ENCODE measurements at regions of chr2 and their contacts with region 1.

Region 1: DNA sequence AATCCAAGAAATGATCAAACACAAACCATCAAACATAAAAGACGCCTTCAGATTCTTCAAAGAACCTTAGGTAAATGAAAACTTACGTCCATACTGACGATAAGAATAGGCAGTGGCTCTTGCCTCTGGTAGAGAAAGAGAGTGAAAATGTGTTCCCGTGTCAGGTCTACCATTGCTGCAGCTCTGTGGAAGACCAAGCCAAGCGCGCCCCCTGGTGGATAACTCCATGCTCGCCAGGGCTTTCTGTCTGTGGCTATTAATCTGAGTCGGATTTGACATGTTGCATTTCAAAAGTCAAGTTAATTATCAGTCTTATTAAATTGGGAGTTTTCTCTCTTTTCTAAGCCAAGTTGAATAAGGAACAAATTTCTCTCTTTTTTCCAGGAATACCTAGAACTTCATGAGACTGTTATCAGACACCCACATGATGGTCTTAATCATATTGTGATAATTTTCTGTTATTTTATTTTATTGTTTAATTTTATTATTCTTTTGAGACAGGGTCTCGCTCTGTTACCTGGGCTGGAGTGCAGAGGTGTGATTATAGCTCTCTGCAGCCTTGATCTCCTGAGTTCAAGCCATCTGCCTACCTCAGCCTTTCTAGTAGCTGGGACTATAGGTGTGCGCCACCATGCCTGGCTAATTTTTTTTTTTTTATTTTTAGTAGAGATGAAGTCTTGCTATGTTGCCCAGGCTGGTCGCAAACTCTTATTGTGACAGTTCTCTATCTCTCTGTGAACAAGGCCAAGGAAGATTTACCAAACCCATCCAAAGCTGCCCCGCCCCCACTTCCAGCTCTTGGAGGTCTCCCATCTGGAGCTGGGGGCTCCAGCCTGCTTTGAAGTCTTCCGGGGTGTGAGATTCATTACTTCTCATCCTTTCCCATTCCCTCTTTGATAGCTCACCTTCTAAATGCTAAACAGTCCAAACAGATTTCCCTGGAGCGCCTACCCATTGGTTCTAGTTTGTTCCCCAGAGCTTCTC is 15.8 kb upstream of the ZAP70 start:
- DNase-seq: peak; percentile 81
- CTCF ChIP-seq: peak; percentile 87

Region 2: DNA sequence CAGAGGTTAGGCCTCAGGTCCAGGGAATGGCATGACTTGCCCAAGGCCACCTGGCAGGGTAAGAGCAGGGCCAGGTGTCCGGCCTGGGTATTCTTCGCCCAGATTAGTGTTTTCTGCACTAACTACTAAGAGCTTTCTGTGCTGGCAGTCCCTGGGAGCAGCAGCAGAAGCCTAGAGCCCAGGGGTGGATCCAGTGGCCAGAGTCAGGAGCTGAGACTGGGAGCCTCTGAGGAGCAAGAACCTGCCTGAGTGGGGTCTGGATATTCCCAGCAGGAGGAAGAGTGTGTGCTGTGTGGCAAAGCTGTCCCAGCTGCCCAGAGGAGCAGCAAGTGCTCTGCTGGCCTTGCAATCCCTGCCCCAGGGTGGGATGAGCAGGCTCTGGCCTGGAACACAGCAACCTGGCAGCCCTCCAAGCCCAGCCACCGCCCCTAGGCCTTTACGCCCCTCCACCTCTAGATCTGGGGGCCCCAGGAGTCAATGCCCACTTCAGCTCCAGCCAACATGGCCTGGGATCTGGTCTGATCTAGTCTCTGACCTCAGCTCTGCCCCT is 1632.1 kb before region 1 on chr2:
- in situ Hi-C with region 1: loop called (anchors 25 kb)
- DNase-seq: no peak
- CTCF ChIP-seq: no peak

Region 3: DNA sequence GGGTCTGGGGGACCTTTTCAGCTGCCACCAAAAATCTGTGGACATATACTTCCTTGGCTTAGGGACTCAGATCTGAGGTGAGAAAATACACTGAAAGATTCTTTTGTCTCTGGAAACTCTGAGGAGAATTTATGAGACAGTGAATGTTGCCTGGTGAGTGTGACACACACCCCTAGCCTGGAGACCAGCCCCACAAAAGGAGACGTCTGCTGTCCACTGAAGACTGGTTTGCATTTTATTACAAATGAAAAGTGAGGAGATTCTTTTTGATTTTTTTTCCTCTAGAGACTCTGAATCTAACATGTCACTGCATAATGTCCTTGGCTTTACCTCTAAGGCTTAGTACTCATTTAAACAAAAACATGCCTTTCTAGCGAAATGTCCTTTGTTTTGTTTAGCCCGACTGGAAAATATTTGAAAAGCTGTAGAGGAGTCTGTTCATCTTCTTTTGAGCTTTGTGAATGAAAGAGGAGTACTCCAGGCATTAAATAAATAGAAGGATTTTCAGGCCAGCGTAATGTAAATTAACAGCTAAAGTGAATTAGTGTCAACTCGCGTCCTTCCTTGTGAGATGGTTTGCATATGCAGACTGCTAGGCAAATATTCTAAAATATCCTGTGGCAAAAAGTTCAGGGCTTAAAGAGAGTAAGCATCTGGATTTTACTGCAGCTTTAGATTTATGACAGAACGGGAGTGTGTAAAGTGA is 514.7 kb after region 1 on chr2:
- in situ Hi-C with region 1: no loop called
- DNase-seq: no peak
- CTCF ChIP-seq: no peak

Region 4: DNA sequence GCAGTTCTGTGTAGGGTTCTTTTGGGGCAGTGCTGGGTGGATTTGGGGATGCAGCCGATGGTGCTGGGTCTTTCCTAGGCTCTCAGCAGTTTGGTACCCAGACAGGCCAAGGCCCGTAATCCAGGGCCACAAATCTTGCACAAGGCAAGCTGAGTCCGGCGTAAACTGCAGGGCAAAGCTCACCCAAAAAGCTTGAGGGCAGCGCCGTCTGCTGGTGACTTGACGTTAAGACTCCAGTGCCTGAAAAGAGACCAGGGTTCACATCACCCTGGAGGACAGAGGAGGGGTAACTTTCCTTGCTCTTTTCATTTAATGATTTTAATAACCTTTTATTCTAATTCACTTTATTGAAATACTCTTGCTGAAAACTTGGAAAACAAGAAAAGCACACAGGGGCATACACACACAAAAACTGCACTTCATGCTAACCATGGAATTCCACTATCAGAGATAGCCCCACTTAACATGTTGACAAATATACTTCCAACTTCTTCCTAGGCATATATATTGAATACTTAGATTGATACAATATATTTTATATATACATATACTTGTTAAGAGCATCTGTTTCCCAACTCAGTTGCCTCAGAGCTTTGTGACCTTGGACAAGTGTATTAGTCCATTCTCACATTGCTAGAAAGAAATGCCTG is 687.6 kb after region 1 on chr2:
- in situ Hi-C with region 1: loop called (anchors 10 kb)
- DNase-seq: peak; percentile 87
- CTCF ChIP-seq: peak; percentile 95

Measured in GM13976 (cell line).